ENCODE measurements at regions of chr2 and their contacts with region 1.

Region 1: GRCh38 chr2:195656859-195657633 is at the start of gene SLC39A10:
- DNase-seq: peak; percentile 96 to 99
- ATAC-seq: peak; percentile 82 to 92 (median 83)
- H3K4me3 ChIP-seq: peak within 1 kb of the TSS; percentile 98
- H3K4me3 Mint-ChIP-seq: peak within 1 kb of the TSS; percentile 96
- H3K27ac ChIP-seq: peak within 1 kb of the TSS; percentile 99
- H3K27ac Mint-ChIP-seq: peak within 1 kb of the TSS; percentile 98 to 100
- H3K4me1 ChIP-seq: peaks cover 11% of the 10 kb centered on the region
- H3K4me1 Mint-ChIP-seq: peaks cover 38 to 42% of the 10 kb centered on the region in 2 donors
- H3K27me3 ChIP-seq: no peaks in the 10 kb centered on the region
- H3K27me3 Mint-ChIP-seq: no peaks in the 10 kb centered on the region
- CTCF ChIP-seq: no peak
- total RNA-seq, gene SLC39A10: 56.5 to 69.6 (median 58.5) TPM

Region 2: GRCh38 chr2:195318440-195319111 is 338.5 kb before region 1 on chr2:
- intact Hi-C with region 1: loop called (anchors 10 kb)
- DNase-seq: peak in 1 of 2 donors; percentile 71
- ATAC-seq: peak in 1 of 3 donors; percentile 45
- H3K4me3 ChIP-seq: no peak overlapping the region
- H3K4me3 Mint-ChIP-seq: no peak overlapping the region
- H3K27ac ChIP-seq: no peak overlapping the region
- H3K27ac Mint-ChIP-seq: no peak overlapping the region
- H3K4me1 ChIP-seq: no peaks in the 10 kb centered on the region
- H3K4me1 Mint-ChIP-seq: no peaks in the 10 kb centered on the region
- H3K27me3 ChIP-seq: no peaks in the 10 kb centered on the region
- H3K27me3 Mint-ChIP-seq: no peaks in the 10 kb centered on the region
- CTCF ChIP-seq: peak; percentile 62

Region 3: DNA sequence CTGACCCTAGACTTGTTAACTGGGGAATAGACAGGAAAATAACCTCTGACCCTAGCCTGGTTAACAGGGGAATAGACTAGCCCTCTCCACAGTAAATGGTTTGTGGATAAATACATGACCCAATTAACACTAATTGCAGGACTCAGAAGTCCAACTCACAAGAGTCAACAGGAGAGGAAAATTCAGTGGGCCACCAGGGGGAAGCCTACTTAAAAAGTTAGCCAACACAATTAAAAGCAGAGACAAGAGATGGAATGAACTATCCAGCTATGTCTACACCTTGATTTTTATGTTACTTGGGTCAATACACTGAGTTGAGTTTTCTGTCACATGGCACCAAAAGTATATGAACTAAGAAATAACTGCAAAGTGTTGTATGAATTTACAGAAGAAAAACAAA is 158.9 kb before region 1 on chr2:
- intact Hi-C with region 1: loop called (anchors 1 kb)
- DNase-seq: peak; percentile 34 to 78
- ATAC-seq: peak in 2 of 3 donors; percentile 69 to 70
- H3K4me3 ChIP-seq: no peak overlapping the region
- H3K4me3 Mint-ChIP-seq: no peak overlapping the region
- H3K27ac ChIP-seq: no peak overlapping the region
- H3K27ac Mint-ChIP-seq: no peak overlapping the region
- H3K4me1 ChIP-seq: peaks cover 2% of the 10 kb centered on the region
- H3K4me1 Mint-ChIP-seq: peaks cover 11 to 13% of the 10 kb centered on the region in 2 donors
- H3K27me3 ChIP-seq: no peaks in the 10 kb centered on the region
- H3K27me3 Mint-ChIP-seq: peaks cover 8 to 9% of the 10 kb centered on the region in 2 donors
- CTCF ChIP-seq: peak; percentile 48

Region 4: GRCh38 chr2:195575879-195576401 is 81.1 kb before region 1 on chr2:
- intact Hi-C with region 1: loop called (anchors 1 kb)
- DNase-seq: peak in 1 of 2 donors; percentile 58
- ATAC-seq: peak in 2 of 3 donors; percentile 45 to 49
- H3K4me3 ChIP-seq: no peak overlapping the region
- H3K4me3 Mint-ChIP-seq: no peak overlapping the region
- H3K27ac ChIP-seq: peak overlapping the region; percentile 8
- H3K27ac Mint-ChIP-seq: peak overlapping the region in 1 of 2 donors; percentile 66
- H3K4me1 ChIP-seq: peaks cover 10% of the 10 kb centered on the region
- H3K4me1 Mint-ChIP-seq: peaks cover 16 to 18% of the 10 kb centered on the region in 2 donors
- H3K27me3 ChIP-seq: no peaks in the 10 kb centered on the region
- H3K27me3 Mint-ChIP-seq: no peaks in the 10 kb centered on the region
- CTCF ChIP-seq: peak; percentile 27

Region 5: GRCh38 chr2:195672668-195673067 is 15.6 kb after region 1 on chr2:
- intact Hi-C with region 1: no loop called
- DNase-seq: no peak
- ATAC-seq: no peak
- H3K4me3 ChIP-seq: no peak overlapping the region
- H3K4me3 Mint-ChIP-seq: no peak overlapping the region
- H3K27ac ChIP-seq: no peak overlapping the region
- H3K27ac Mint-ChIP-seq: no peak overlapping the region
- H3K4me1 ChIP-seq: peaks cover 10% of the 10 kb centered on the region
- H3K4me1 Mint-ChIP-seq: peaks cover 27 to 29% of the 10 kb centered on the region in 2 donors
- H3K27me3 ChIP-seq: no peaks in the 10 kb centered on the region
- H3K27me3 Mint-ChIP-seq: no peaks in the 10 kb centered on the region
- CTCF ChIP-seq: no peak

Region 6: GRCh38 chr2:196176142-196176738 is 519.2 kb after region 1 on chr2:
- intact Hi-C with region 1: loop called (anchors 5 kb)
- DNase-seq: peak; percentile 69 to 95
- ATAC-seq: peak; percentile 38 to 58 (median 54)
- H3K4me3 ChIP-seq: peak overlapping the region; percentile 0
- H3K4me3 Mint-ChIP-seq: peak overlapping the region; percentile 79
- H3K27ac ChIP-seq: peak overlapping the region; percentile 83
- H3K27ac Mint-ChIP-seq: peak overlapping the region; percentile 86 to 95
- H3K4me1 ChIP-seq: peaks cover 50% of the 10 kb centered on the region
- H3K4me1 Mint-ChIP-seq: peaks cover 55 to 57% of the 10 kb centered on the region in 2 donors
- H3K27me3 ChIP-seq: no peaks in the 10 kb centered on the region
- H3K27me3 Mint-ChIP-seq: no peaks in the 10 kb centered on the region
- CTCF ChIP-seq: no peak

Region 7: GRCh38 chr2:197310271-197310985 is 1653.4 kb after region 1 on chr2 and contains the start of gene ANKRD44:
- intact Hi-C with region 1: loop called (anchors 5 kb)
- DNase-seq: peak; percentile 89 to 93
- ATAC-seq: peak; percentile 76 to 89 (median 86)
- H3K4me3 ChIP-seq: peak within 1 kb of the TSS; percentile 95
- H3K4me3 Mint-ChIP-seq: peak within 1 kb of the TSS; percentile 96
- H3K27ac ChIP-seq: peak within 1 kb of the TSS; percentile 98
- H3K27ac Mint-ChIP-seq: peak within 1 kb of the TSS; percentile 94 to 97
- H3K4me1 ChIP-seq: peaks cover 30% of the 10 kb centered on the region
- H3K4me1 Mint-ChIP-seq: peaks cover 49 to 56% of the 10 kb centered on the region in 2 donors
- H3K27me3 ChIP-seq: no peaks in the 10 kb centered on the region
- H3K27me3 Mint-ChIP-seq: no peaks in the 10 kb centered on the region
- CTCF ChIP-seq: peak; percentile 9
- total RNA-seq, gene ANKRD44: 252 to 376 (median 311) TPM

Measured in natural killer cell (primary cell).